ENCODE measurements at regions of chr15 and their contacts with region 1.

Region 1: DNA sequence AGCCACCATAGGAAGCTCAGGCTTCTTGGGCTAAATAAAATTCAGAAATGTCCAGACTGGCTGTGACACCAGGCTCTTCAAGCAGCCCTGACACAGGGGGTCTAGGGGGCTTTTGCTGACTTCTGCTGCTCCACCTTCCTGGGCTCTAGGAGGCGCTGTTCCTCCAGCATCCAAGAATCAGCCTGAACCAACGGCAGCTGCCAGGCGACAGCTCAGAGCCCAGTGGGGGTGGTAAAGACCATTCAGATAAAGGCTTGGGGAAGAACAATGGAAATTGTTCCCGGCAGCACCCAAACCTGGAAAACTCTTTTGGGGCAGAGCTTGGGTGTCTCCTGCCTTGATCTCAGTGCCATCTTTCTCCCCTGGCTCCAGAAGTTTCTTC is 21.6 kb upstream of the PSTPIP1 start:
- DNase-seq: peak; percentile 86
- ATAC-seq: peak; percentile 82
- H3K4me3 Mint-ChIP-seq: no peak overlapping the region
- H3K27ac Mint-ChIP-seq: peak overlapping the region; percentile 36
- H3K4me1 Mint-ChIP-seq: peaks cover 24% of the 10 kb centered on the region
- H3K27me3 Mint-ChIP-seq: no peaks in the 10 kb centered on the region
- CTCF ChIP-seq: peak; percentile 90

Region 2: GRCh38 chr15:76664895-76665294 is 308.5 kb before region 1 on chr15:
- CTCF ChIA-PET with region 1: no interaction called
- POLR2A ChIA-PET with region 1: no interaction called
- intact Hi-C with region 1: no loop called
- DNase-seq: no peak
- ATAC-seq: no peak
- H3K4me3 Mint-ChIP-seq: no peak overlapping the region
- H3K27ac Mint-ChIP-seq: no peak overlapping the region
- H3K4me1 Mint-ChIP-seq: peaks cover 7% of the 10 kb centered on the region
- H3K27me3 Mint-ChIP-seq: no peaks in the 10 kb centered on the region
- CTCF ChIP-seq: no peak

Region 3: GRCh38 chr15:76947454-76947853 is 25.9 kb before region 1 on chr15:
- CTCF ChIA-PET with region 1: interaction called, 17 read pairs
- POLR2A ChIA-PET with region 1: no interaction called
- intact Hi-C with region 1: no loop called
- DNase-seq: no peak
- ATAC-seq: no peak
- H3K4me3 Mint-ChIP-seq: no peak overlapping the region
- H3K27ac Mint-ChIP-seq: no peak overlapping the region
- H3K4me1 Mint-ChIP-seq: peaks cover 13% of the 10 kb centered on the region
- H3K27me3 Mint-ChIP-seq: no peaks in the 10 kb centered on the region
- CTCF ChIP-seq: no peak

Region 4: GRCh38 chr15:76994971-76995945 is 21.9 kb after region 1 on chr15 and contains the start of gene PSTPIP1:
- CTCF ChIA-PET with region 1: interaction called, 42 read pairs
- POLR2A ChIA-PET with region 1: interaction called, 6 read pairs
- intact Hi-C with region 1: no loop called
- DNase-seq: peak; percentile 83
- ATAC-seq: peak; percentile 69
- H3K4me3 Mint-ChIP-seq: peak within 1 kb of the TSS; percentile 95
- H3K27ac Mint-ChIP-seq: peak within 1 kb of the TSS; percentile 98
- H3K4me1 Mint-ChIP-seq: peaks cover 61% of the 10 kb centered on the region
- H3K27me3 Mint-ChIP-seq: no peaks in the 10 kb centered on the region
- CTCF ChIP-seq: no peak
- total RNA-seq, gene PSTPIP1: 113 to 121 TPM

Region 5: GRCh38 chr15:77024271-77025082 is 51.1 kb after region 1 on chr15:
- CTCF ChIA-PET with region 1: interaction called, 105 read pairs
- POLR2A ChIA-PET with region 1: interaction called, 14 read pairs
- intact Hi-C with region 1: no loop called
- DNase-seq: peak; percentile 81
- ATAC-seq: no peak
- H3K4me3 Mint-ChIP-seq: no peak overlapping the region
- H3K27ac Mint-ChIP-seq: peak overlapping the region; percentile 100
- H3K4me1 Mint-ChIP-seq: peaks cover 58% of the 10 kb centered on the region
- H3K27me3 Mint-ChIP-seq: no peaks in the 10 kb centered on the region
- CTCF ChIP-seq: peak; percentile 99

Region 6: DNA sequence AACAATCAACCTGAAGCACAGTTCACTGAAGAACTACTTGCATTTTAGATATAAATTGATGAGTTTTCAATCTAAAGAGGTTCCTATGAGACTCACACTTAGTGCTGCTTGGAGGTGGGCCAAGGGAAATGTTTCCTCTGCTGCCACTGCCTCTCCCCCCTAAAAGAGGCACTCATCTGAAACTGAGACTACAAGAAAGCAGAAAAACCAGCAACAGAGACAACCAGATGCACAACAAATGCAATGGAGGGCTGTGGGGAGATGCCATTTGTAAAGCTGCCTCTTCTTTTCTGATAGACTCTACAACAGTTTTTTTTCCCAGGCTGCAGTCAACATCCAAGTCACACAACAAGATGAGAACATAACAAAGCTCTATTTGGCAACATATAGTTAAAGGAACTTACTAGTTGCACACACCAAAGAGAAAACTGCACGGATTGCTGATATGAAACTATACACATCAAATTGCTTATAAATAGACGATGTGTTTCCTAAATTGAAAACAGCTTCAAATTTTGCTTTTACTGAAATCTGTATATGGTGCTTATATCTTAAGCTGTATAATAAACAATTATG is 86.5 kb after region 1 on chr15:
- CTCF ChIA-PET with region 1: interaction called, 18 read pairs
- POLR2A ChIA-PET with region 1: no interaction called
- intact Hi-C with region 1: no loop called
- DNase-seq: peak; percentile 53
- ATAC-seq: peak; percentile 80
- H3K4me3 Mint-ChIP-seq: peak overlapping the region; percentile 8
- H3K27ac Mint-ChIP-seq: peak overlapping the region; percentile 10
- H3K4me1 Mint-ChIP-seq: peaks cover 52% of the 10 kb centered on the region
- H3K27me3 Mint-ChIP-seq: no peaks in the 10 kb centered on the region
- CTCF ChIP-seq: no peak

Region 7: GRCh38 chr15:77179541-77179998 is 206.2 kb after region 1 on chr15:
- CTCF ChIA-PET with region 1: interaction called, 10 read pairs
- POLR2A ChIA-PET with region 1: interaction called, 4 read pairs
- intact Hi-C with region 1: no loop called
- DNase-seq: peak; percentile 40
- ATAC-seq: peak; percentile 67
- H3K4me3 Mint-ChIP-seq: no peak overlapping the region
- H3K27ac Mint-ChIP-seq: peak overlapping the region; percentile 82
- H3K4me1 Mint-ChIP-seq: peaks cover 46% of the 10 kb centered on the region
- H3K27me3 Mint-ChIP-seq: no peaks in the 10 kb centered on the region
- CTCF ChIP-seq: no peak

Measured in activated CD8-positive, alpha-beta T cell treated with anti-CD3 and anti-CD28 coated beads for 36 hours (primary cell).